Naive thymus-derived CD4-positive, alpha-beta T cell (primary cell): ENCODE measurements at regions of chr4 and their contacts with region 1.

Region 1: GRCh38 chr4:1792832-1793495 is at the start of gene FGFR3:
- DNase-seq: peak in 3 of 9 donors; percentile 16 to 71 (median 31)
- ATAC-seq: peak; percentile 90
- H3K4me3 ChIP-seq: no peak within 1 kb of the TSS
- H3K4me3 Mint-ChIP-seq: peak within 1 kb of the TSS in 8 of 10 donors; percentile 34 to 72 (median 46)
- H3K27ac ChIP-seq: no peak within 1 kb of the TSS
- H3K27ac Mint-ChIP-seq: peak within 1 kb of the TSS in 1 of 9 donors; percentile 56
- H3K4me1 ChIP-seq: peaks cover 0 to 5% of the 10 kb centered on the region in 2 donors
- H3K4me1 Mint-ChIP-seq: peaks cover 0 to 1% (median 0%) of the 10 kb centered on the region in 7 donors
- H3K27me3 ChIP-seq: peaks cover 0 to 12% of the 10 kb centered on the region in 2 donors
- H3K27me3 Mint-ChIP-seq: peaks cover 9 to 28% (median 11%) of the 10 kb centered on the region in 5 donors
- total RNA-seq, gene FGFR3: 1.0 TPM in 1 of 5 experiments, not detected in the others

Region 2: DNA sequence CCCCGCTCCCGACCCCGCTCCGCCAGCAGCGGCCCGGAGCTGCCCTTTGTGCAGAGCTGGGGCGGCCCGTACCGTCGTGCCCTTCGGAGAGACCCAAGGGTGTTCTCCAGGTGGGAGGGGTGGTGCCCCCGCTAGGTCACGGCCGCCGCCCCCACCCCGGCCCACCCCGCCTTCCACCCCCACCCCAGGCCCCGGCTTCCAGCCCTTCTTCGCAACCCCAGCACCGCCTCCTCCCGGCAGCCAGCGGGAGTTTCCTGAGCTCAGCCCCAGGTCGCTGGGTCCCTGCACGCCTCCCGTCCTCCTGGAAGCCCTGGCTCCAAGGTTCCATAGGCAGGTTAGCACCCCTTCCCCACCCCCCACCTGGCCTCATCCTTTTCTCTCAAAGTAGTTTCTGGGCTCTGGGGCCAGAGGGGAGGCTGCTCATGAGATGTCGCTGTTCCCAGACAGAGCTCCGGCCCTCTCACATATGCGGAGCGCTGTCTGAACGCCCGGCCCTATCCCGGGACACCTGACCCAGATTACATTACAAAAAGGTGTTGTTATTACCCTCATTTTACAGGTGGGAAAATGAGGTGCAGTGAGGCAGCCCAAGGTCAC is 25.1 kb before region 1 on chr4:
- CTCF ChIA-PET with region 1: no interaction called
- POLR2A ChIA-PET with region 1: no interaction called
- intact Hi-C with region 1: loop called in 1 of 2 experiments (anchors 2 kb)
- DNase-seq: peak in 1 of 9 donors; percentile 50
- ATAC-seq: peak; percentile 39
- H3K4me3 ChIP-seq: no peak overlapping the region
- H3K4me3 Mint-ChIP-seq: peak overlapping the region in 9 of 10 donors; percentile 2 to 82 (median 68)
- H3K27ac ChIP-seq: no peak overlapping the region
- H3K27ac Mint-ChIP-seq: no peak overlapping the region
- H3K4me1 ChIP-seq: no peaks in the 10 kb centered on the region
- H3K4me1 Mint-ChIP-seq: peaks cover 0 to 9% (median 0%) of the 10 kb centered on the region in 7 donors
- H3K27me3 ChIP-seq: no peaks in the 10 kb centered on the region
- H3K27me3 Mint-ChIP-seq: peaks cover 4 to 31% (median 10%) of the 10 kb centered on the region in 5 donors

Region 3: DNA sequence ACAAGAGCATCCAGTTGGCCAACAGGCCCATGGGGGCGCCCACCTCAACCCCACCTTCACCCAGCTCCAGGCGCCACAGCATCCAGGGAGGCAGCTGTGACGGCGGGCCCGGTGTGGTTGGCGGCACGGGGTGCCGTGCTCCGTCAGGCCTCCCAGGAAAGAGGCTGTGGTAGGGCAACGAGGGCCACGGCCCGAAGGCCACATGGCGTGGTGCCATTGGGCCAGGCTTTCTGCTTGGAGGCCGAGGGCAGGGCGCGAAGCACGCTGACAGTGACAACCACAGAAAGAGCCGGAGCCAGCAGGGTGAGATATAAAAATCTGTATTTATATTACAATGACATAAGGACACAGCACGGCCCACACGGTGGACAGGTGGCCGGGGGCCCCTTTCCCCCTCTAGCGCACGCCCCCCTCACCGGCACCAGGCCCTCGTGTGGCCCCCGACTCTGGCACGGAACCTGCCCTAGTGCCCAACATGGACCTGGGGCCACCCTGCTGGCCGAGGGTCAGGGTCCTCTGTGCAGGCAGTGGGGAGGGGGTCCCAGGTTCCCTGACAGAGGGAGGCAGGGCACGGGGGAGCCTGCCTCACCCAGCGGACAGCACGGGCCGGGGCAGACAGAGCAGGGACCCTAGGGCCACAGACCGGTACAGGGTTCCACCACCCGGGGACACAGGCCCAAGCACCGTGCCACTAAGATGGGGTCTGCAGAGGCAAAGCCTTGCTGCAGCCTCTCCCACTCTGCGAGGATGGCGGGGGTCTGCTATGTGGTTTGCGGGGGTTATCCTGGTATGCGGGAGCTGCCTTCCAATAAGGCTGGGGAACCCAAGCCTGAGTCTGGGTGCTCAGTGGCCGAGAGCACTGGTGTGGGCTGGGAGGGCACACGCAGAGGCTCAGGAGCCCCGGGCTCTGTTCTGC is 454.4 kb after region 1 on chr4:
- CTCF ChIA-PET with region 1: no interaction called
- POLR2A ChIA-PET with region 1: no interaction called
- intact Hi-C with region 1: no loop called
- DNase-seq: peak in 1 of 9 donors; percentile 20
- ATAC-seq: no peak
- H3K4me3 ChIP-seq: no peak overlapping the region
- H3K4me3 Mint-ChIP-seq: no peak overlapping the region
- H3K27ac ChIP-seq: no peak overlapping the region
- H3K27ac Mint-ChIP-seq: no peak overlapping the region
- H3K4me1 ChIP-seq: no peaks in the 10 kb centered on the region
- H3K4me1 Mint-ChIP-seq: peaks cover 18 to 24% (median 20%) of the 10 kb centered on the region in 7 donors
- H3K27me3 ChIP-seq: no peaks in the 10 kb centered on the region
- H3K27me3 Mint-ChIP-seq: peaks cover 0 to 6% (median 0%) of the 10 kb centered on the region in 5 donors